Activated T-helper 2 cell treated with anti-CD3 and anti-CD28 coated beads, Interferon-gamma antibody, Interleukin-2, Interleukin-4, amounts not matched to agents 10 μg/mL and 5 μg/mL and 100 μg/mL, durations not matched to agents 14 hours and 24 hours and 36 hours (primary cell): ENCODE measurements at regions of chr22 and their contacts with region 1.

Region 1: DNA sequence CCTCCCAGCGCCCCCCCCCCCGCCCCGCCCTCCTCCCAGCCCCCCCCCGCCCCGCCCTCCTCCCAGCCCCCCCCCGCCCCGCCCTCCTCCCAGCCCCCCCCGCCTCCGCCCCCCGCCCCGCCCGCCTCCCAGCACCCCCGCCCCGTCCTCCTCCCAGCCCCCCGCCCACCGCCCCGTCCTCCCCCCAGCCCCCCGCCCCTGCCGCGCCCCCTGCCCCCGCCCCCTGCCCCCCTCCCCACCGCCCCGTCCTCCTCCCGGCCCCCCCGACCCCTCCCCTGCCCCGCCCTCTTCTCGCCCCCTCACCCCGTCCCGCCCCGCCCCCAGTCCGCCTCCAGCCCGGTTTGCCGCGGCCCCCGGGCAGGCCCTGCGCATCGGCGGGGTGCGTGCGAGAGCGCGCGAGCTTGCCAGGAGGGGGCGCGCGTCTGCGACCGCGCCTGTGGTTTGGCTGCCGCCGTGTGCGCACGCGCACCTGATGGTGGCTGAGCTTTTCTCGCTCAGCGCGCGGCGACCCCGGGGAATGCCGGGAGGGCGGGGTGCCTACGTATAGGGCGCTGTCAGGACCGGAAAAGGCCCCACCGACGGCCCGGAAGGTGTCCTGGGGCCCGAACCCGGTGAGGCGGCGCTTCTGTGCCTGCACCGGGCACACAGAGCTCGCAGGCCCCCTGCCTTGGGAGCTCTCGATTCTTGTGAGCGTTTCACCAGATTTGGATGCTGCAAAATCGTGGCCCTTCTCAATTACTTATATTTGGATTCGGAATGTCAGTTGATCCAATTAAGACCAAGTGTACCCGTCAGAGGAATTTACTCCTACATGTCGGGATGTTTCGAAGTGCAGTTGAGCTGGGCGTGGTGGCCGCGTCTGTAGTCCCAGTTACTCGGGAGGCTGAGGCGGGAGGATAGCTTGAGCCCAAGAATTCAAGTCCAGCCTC is 501 bp upstream of the TTLL12 start:
- DNase-seq: peak; percentile 97
- H3K4me3 Mint-ChIP-seq: peak overlapping the region; percentile 82
- H3K27ac Mint-ChIP-seq: peak overlapping the region; percentile 91
- H3K4me1 Mint-ChIP-seq: peaks cover 15% of the 10 kb centered on the region
- H3K27me3 Mint-ChIP-seq: peaks cover 7% of the 10 kb centered on the region

Region 2: GRCh38 chr22:43151251-43152002 is 36.0 kb before region 1 on chr22 and contains the start of gene TSPO:
- intact Hi-C with region 1: loop called (anchors 5 kb)
- DNase-seq: peak; percentile 47
- H3K4me3 Mint-ChIP-seq: peak within 1 kb of the TSS; percentile 99
- H3K27ac Mint-ChIP-seq: peak within 1 kb of the TSS; percentile 94
- H3K4me1 Mint-ChIP-seq: peaks cover 28% of the 10 kb centered on the region
- H3K27me3 Mint-ChIP-seq: no peaks in the 10 kb centered on the region
- total RNA-seq, gene TSPO: 126 and 127 TPM in 2 replicates

Region 3: GRCh38 chr22:43326331-43327156 is 139.1 kb after region 1 on chr22:
- intact Hi-C with region 1: no loop called
- DNase-seq: no peak
- H3K4me3 Mint-ChIP-seq: no peak overlapping the region
- H3K27ac Mint-ChIP-seq: no peak overlapping the region
- H3K4me1 Mint-ChIP-seq: peaks cover 4% of the 10 kb centered on the region
- H3K27me3 Mint-ChIP-seq: peaks cover 5% of the 10 kb centered on the region